A673 (cell line): ENCODE measurements at regions of chr7 and their contacts with region 1.

Region 1: GRCh38 chr7:150356265-150356897 is 12.2 kb upstream of the REPIN1 start:
- DNase-seq: peak; percentile 67
- H3K4me3 ChIP-seq: no peak overlapping the region
- H3K27ac ChIP-seq: no peak overlapping the region
- H3K4me1 ChIP-seq: peaks cover 25% of the 10 kb centered on the region
- H3K27me3 ChIP-seq: no peaks in the 10 kb centered on the region
- CTCF ChIP-seq: peak; percentile 81

Region 2: DNA sequence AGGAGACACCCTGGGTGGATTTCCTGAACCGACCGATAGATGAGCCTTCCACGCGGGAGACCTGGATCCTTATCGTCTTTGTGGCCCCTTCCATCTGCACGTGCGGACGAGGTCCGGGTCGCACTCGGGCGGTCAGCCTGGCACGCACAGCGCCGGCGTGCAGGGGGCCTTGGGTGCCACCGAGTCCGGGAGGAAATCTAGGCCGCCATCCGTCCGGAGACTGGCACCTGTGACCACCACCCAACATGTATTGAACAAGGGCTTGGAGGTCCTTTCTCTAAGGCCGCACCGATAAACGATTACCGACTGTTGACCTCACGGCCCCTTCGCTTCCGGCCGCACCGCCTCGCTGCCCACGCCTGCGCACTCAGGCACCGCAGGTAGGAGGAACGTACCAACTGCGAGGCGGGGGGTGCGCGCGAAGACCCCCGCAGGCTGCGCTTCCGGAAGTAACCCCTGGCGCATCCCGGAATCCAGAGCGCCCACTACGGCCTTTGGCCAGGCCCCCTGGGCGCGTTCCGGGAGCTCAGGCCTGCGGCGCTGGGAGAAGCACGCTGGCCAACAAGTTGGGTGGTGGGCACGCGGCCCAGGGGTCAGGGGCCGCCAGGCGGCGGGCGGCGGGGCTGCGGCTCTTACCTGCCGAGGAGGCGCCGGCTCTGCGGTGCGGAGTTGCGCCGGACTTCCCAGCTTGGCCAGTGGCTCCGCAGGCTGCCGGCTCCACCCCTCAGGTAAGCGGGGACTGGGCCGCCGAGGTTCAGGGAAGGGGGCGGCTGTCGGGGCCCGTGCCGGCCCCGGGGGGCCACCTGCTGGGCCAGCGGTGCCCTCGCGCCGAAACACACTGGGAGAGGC is 33.3 kb before region 1 on chr7 and contains the starts of genes ACTR3C and LRRC61:
- CTCF ChIA-PET with region 1: interaction called, 8 read pairs
- POLR2A ChIA-PET with region 1: no interaction called
- intact Hi-C with region 1: loop called (anchors 1 kb)
- DNase-seq: peak; percentile 73
- H3K4me3 ChIP-seq: peak within 1 kb of the TSS; percentile 87
- H3K27ac ChIP-seq: peak within 1 kb of the TSS; percentile 91
- H3K4me1 ChIP-seq: peaks cover 14% of the 10 kb centered on the region
- H3K27me3 ChIP-seq: no peaks in the 10 kb centered on the region
- CTCF ChIP-seq: 0 out of 2 replicates have a peak, but pooled peaks have one; percentile 8
- total RNA-seq, gene ACTR3C: 4.5 TPM in 2 replicates
- total RNA-seq, gene LRRC61: 48.1 and 48.5 TPM in 2 replicates

Region 3: DNA sequence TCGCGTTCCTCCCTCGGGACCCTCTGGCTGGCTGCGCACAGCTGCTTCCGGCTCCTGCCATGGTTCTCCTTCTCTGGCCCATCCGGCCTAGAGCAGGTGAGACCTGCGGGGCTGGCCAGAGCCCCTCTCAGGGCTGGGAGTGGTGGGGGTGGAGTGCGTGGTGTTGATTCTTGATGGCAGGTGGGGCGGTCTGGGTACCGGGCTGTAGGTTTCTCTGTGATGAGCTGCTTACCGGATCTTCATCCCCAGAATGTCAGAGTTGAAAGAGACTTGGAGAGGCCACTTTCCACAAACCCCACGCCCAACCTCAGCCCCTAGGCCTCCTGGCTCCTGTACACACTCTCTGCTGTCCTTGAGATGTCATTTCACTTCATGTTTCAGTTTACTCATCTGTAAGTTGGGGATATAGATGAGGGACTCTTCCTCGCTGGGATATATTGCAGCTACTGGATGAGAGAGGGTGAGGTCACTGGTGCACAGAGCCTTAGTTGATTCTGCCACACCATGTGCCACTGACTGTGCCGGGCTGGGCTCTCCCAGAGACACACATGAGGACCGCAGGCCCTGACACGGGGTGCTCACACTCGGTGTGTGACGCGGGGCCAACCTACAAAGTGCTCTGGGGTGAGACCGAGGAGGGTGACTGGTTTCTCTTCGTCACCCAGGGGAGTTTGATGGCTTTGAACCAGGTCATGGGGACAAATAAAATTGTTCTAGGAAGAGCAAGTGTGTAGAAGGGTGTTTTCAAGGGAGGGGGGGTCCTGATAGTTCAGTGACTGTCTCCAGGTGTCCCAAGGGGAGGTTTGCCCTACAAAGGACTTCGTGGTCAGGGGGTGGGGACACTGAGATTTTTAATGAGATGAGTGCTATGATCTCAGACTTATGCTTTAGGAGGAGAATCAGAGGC is 52.3 kb after region 1 on chr7:
- CTCF ChIA-PET with region 1: no interaction called
- POLR2A ChIA-PET with region 1: no interaction called
- intact Hi-C with region 1: no loop called
- DNase-seq: no peak
- H3K4me3 ChIP-seq: no peak overlapping the region
- H3K27ac ChIP-seq: no peak overlapping the region
- H3K4me1 ChIP-seq: peaks cover 17% of the 10 kb centered on the region
- H3K27me3 ChIP-seq: no peaks in the 10 kb centered on the region
- CTCF ChIP-seq: no peak

Region 4: GRCh38 chr7:150420987-150421674 is 64.8 kb after region 1 on chr7:
- CTCF ChIA-PET with region 1: no interaction called
- POLR2A ChIA-PET with region 1: no interaction called
- intact Hi-C with region 1: loop called (anchors 5 kb)
- DNase-seq: peak; percentile 88
- H3K4me3 ChIP-seq: no peak overlapping the region
- H3K27ac ChIP-seq: no peak overlapping the region
- H3K4me1 ChIP-seq: peaks cover 4% of the 10 kb centered on the region
- H3K27me3 ChIP-seq: no peaks in the 10 kb centered on the region
- CTCF ChIP-seq: peak; percentile 96